Ascending aorta (tissue), 2 donors: ENCODE measurements at regions of chr6 and their contacts with region 1.

Region 1: DNA sequence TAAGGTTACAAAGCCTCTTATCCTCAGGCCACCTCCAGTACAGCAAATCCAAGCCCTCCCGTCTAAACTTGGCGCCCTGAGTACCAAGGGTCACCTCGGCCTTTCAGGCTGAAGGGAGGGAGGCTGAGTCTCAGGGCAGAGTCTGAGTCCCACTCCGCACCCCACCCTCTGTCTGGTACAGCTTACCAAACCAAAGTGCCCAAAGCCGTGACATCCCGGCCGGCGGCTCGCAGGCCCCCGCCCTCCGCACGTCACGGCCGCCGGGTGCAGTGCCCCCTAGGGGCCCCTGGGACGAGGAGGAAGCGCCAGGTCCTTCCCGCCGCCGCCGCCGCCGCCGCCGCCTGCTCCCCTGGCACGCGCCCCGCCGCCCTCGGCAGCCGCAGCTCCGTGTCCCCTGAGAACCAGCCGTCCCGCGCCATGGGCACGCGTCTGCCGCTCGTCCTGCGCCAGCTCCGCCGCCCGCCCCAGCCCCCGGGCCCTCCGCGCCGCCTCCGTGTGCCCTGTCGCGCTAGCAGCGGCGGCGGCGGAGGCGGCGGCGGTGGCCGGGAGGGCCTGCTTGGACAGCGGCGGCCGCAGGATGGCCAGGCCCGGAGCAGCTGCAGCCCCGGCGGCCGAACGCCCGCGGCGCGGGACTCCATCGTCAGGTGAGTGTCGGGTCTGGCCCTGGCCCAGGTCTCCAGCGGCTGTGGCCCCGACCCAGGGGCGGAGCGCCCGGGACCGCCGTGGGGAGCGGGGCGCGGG is at the start of gene MTHFD1L:
- DNase-seq: peak; percentile 52 to 94
- H3K4me3 ChIP-seq: peak within 1 kb of the TSS; percentile 75 to 80
- H3K27ac ChIP-seq: peak within 1 kb of the TSS; percentile 94 to 100
- H3K4me1 ChIP-seq: peaks cover 0 to 20% of the 10 kb centered on the region in 2 donors
- H3K27me3 ChIP-seq: no peaks in the 10 kb centered on the region
- CTCF ChIP-seq: peak; percentile 27 to 63 (median 47)
- total RNA-seq, gene MTHFD1L: 10.4 TPM

Region 2: DNA sequence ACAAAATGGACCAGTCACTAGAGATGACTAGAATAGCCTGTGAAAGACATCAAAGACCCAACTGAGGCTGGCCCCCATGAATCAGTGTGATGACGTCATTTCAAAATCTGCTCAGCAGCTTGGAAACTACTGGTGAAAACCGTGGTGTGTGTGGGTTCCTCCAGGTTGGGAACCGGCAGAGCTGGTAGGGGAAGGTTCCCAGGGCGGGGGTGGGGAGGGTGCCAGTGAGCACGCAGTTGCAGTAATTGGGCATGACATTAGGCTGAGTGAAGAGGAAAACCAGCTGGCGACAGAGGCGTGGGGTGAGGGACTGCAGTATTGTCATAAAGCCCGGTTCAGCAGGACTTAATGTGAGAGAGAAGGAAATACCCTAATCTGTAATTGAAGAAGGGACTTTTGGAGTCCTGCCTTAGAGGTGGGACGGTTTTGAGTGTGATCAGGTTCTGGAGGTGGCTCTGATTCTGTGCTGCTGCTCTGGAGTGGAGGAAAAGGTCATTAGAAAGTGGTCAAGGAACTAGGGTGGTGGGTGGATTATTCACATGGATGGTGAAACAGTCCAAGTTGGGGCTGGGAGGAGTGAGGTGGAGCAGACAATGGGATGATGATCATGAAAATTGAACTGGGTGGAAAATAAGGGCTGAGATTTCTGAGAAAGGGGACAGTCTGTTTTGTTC is 52.1 kb before region 1 on chr6:
- intact Hi-C with region 1: no loop called
- DNase-seq: no peak
- H3K4me3 ChIP-seq: no peak overlapping the region
- H3K27ac ChIP-seq: peak overlapping the region in 1 of 2 donors; percentile 22
- H3K4me1 ChIP-seq: peaks cover 0 to 8% of the 10 kb centered on the region in 2 donors
- H3K27me3 ChIP-seq: no peaks in the 10 kb centered on the region
- CTCF ChIP-seq: no peak

Region 3: GRCh38 chr6:150881911-150882481 is 16.4 kb after region 1 on chr6:
- intact Hi-C with region 1: loop called (anchors 2 kb)
- DNase-seq: peak in 1 of 2 donors; percentile 90
- H3K4me3 ChIP-seq: no peak overlapping the region
- H3K27ac ChIP-seq: peak overlapping the region; percentile 83 to 94
- H3K4me1 ChIP-seq: peaks cover 9 to 59% of the 10 kb centered on the region in 2 donors
- H3K27me3 ChIP-seq: no peaks in the 10 kb centered on the region
- CTCF ChIP-seq: no peak

Region 4: GRCh38 chr6:151029970-151030369 is 164.4 kb after region 1 on chr6:
- intact Hi-C with region 1: no loop called
- DNase-seq: peak in 1 of 2 donors; percentile 48
- H3K4me3 ChIP-seq: no peak overlapping the region
- H3K27ac ChIP-seq: no peak overlapping the region
- H3K4me1 ChIP-seq: peaks cover 0 to 5% of the 10 kb centered on the region in 2 donors
- H3K27me3 ChIP-seq: no peaks in the 10 kb centered on the region
- CTCF ChIP-seq: no peak

Region 5: GRCh38 chr6:151205721-151206600 is 340.4 kb after region 1 on chr6:
- intact Hi-C with region 1: no loop called
- DNase-seq: no peak
- H3K4me3 ChIP-seq: no peak overlapping the region
- H3K27ac ChIP-seq: no peak overlapping the region
- H3K4me1 ChIP-seq: no peaks in the 10 kb centered on the region
- H3K27me3 ChIP-seq: no peaks in the 10 kb centered on the region
- CTCF ChIP-seq: no peak

Region 6: GRCh38 chr6:151451950-151452749 is 586.6 kb after region 1 on chr6 and contains the start of gene RMND1:
- intact Hi-C with region 1: loop called (anchors 5 kb)
- DNase-seq: peak; percentile 99 to 100
- H3K4me3 ChIP-seq: peak within 1 kb of the TSS; percentile 86
- H3K27ac ChIP-seq: peak within 1 kb of the TSS; percentile 96
- H3K4me1 ChIP-seq: peaks cover 0 to 8% of the 10 kb centered on the region in 2 donors
- H3K27me3 ChIP-seq: no peaks in the 10 kb centered on the region
- CTCF ChIP-seq: no peak
- total RNA-seq, gene RMND1: 3.8 TPM